Sigmoid colon (tissue), 7 donors: ENCODE measurements at regions of chr19 and their contacts with region 1.

Region 1: DNA sequence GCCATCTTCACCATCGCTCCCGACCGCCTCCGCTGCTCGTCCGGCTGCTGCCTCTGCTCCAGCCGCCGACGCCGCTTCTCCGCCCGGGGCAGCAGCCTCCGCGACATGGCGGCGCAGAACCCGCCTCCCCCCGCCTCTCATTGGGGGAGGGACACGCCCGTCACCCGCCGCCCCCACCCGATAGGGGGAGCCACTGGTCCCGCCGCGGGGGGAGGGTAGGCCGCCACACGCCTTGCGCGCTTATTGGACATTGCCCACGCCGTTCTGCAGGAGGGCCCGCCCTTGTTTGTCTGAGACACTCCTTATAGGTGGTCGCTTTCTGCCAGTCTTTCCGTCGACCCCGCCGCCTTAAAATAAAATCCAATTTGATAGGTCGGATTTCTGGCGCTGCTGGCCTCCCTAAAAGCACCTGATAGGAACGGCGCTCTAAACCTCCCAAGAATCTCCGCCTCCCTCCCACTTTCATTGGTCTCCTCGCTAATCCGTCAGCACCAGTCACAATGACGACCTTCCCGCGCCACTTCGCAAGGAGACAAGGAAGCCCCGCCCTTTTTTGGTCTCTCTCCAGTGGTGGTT is at the start of gene HNRNPL:
- DNase-seq: peak; percentile 100
- H3K4me3 ChIP-seq: peak within 1 kb of the TSS; percentile 73 to 100 (median 98)
- H3K27ac ChIP-seq: peak within 1 kb of the TSS; percentile 100
- H3K4me1 ChIP-seq: peaks cover 0 to 59% (median 49%) of the 10 kb centered on the region in 4 donors
- H3K27me3 ChIP-seq: no peaks in the 10 kb centered on the region
- CTCF ChIP-seq: no peak
- EP300 ChIP-seq: peak in 1 of 4 donors; percentile 10
- POLR2A ChIP-seq: peak; percentile 88 to 89
- total RNA-seq, gene HNRNPL: 140 to 201 (median 171) TPM

Region 2: DNA sequence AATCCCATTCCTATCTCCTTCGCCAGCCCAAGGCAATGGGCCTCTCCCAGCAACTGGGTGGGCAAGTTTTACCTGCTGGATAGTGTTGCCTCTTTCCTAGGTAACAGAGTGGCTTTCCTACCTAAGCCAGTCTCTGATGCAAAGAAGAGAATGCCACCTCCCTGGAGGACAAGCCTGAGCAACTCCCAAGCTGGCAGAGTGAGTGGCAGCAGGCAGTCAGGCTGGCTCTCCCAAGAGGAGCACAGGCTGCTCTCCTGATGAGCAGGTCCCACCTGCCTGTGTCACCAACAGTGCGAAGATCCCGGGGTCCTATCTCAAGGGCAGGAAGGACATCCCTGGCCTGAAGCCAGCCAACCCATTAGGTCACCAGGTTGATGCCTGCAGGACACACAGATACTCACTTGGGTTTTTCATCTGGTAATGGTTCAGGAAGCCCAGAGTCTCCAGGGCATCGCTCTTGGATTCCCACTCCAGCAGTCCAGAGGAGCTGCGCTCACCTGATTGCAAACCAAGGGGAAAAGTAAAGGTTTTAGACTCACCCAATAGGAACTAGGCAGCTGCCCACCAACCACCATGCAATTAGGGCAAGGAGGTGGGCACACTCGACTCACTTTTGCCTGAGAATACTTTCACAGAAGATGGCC is 12.8 kb before region 1 on chr19:
- intact Hi-C with region 1: loop called (anchors 1 kb)
- DNase-seq: no peak
- H3K4me3 ChIP-seq: no peak overlapping the region
- H3K27ac ChIP-seq: peak overlapping the region in 1 of 4 donors; percentile 7
- H3K4me1 ChIP-seq: peaks cover 0 to 26% (median 20%) of the 10 kb centered on the region in 4 donors
- H3K27me3 ChIP-seq: no peaks in the 10 kb centered on the region
- CTCF ChIP-seq: no peak
- EP300 ChIP-seq: no peak
- POLR2A ChIP-seq: no peak

Region 3: DNA sequence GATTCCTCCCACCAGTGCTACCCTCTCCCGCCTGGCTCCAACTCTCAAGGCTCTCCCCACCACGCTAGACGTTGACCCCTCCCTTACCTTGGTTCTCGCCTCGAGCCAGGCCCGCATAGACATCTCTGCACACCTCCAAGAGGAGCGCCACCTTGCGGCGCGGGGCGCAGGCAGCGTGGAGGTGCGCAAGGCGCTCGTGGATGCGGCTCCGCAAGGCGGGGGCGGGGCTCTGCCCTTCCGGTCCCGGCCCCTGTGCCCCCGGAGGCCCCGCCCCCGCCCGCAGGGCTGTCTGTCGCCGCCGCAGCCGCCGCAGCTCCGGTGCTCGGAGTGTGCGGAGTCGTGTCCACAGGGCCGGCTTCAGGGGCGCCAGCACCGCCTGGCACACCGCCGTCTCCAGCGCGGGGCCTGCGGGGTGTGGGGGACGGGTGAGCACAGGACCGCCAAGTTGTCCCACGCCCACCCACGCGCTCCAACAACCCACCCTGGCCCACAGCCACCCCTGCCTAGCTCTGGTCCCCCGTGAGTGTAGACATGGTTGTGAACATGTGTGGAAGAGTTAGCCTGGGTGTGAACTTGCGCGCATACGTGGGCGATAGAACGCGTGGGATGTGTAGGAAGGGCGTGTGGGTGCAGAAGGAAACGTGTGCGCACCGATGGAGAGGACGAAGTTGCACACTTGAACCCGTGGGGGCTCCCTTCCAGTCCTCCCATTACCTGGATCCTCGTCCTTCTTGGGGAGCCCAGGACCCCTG is 20.1 kb after region 1 on chr19:
- intact Hi-C with region 1: loop called (anchors 2 kb)
- DNase-seq: peak; percentile 94
- H3K4me3 ChIP-seq: peak overlapping the region; percentile 13 to 55 (median 48)
- H3K27ac ChIP-seq: peak overlapping the region; percentile 35 to 64 (median 52)
- H3K4me1 ChIP-seq: peaks cover 0 to 17% (median 15%) of the 10 kb centered on the region in 4 donors
- H3K27me3 ChIP-seq: no peaks in the 10 kb centered on the region
- CTCF ChIP-seq: peak; percentile 59 to 88 (median 73)
- EP300 ChIP-seq: no peak
- POLR2A ChIP-seq: no peak

Region 4: GRCh38 chr19:38899447-38900219 is 49.7 kb after region 1 on chr19 and contains the starts of genes NFKBIB and SIRT2:
- intact Hi-C with region 1: loop called (anchors 1 kb)
- DNase-seq: peak; percentile 100
- H3K4me3 ChIP-seq: peak within 1 kb of the TSS; percentile 58 to 90 (median 66)
- H3K27ac ChIP-seq: peak within 1 kb of the TSS; percentile 90 to 95 (median 92)
- H3K4me1 ChIP-seq: peaks cover 0 to 51% (median 37%) of the 10 kb centered on the region in 4 donors
- H3K27me3 ChIP-seq: no peaks in the 10 kb centered on the region
- CTCF ChIP-seq: no peak
- EP300 ChIP-seq: peak in 1 of 4 donors; percentile 63
- POLR2A ChIP-seq: peak; percentile 44 to 69
- total RNA-seq, gene NFKBIB: 13.8 to 20.2 (median 16.9) TPM
- total RNA-seq, gene SIRT2: 65.5 to 92.7 (median 85.2) TPM